ENCODE measurements at regions of chr1 and their contacts with region 1.

Region 1: DNA sequence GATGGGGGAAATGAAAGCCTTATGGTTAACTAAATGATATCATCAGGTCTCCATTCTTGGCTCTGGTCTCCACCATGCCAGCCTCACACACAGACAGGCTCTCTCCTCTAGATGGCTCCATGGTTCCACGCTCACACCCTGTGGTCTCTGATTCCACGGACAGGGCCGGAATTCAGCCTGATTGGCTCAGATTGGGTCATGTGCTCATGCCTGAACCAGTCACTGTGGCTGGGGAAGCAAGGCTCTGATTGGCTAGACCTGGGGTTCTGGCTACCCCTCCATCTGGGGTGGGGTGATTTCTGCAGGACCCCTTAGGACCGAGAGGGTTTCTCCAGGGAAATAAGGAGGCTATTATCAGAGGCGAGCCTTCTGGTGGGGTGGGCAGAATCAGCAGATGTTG is 277.0 kb downstream of the PTPRU start:
- DNase-seq: peak in 1 of 2 donors; percentile 24
- ATAC-seq: peak; percentile 53 to 97 (median 84)
- H3K4me3 ChIP-seq: no peak overlapping the region
- H3K27ac ChIP-seq: no peak overlapping the region
- H3K4me1 ChIP-seq: no peaks in the 10 kb centered on the region
- H3K27me3 ChIP-seq: peaks cover 0 to 26% (median 4%) of the 10 kb centered on the region in 3 donors
- CTCF ChIP-seq: peak; percentile 40

Region 2: GRCh38 chr1:29688471-29689365 is 175.4 kb after region 1 on chr1:
- intact Hi-C with region 1: loop called in 1 of 2 experiments (anchors 10 kb)
- DNase-seq: peak in 1 of 2 donors; percentile 26
- ATAC-seq: no peak
- H3K4me3 ChIP-seq: no peak overlapping the region
- H3K27ac ChIP-seq: no peak overlapping the region
- H3K4me1 ChIP-seq: no peaks in the 10 kb centered on the region
- H3K27me3 ChIP-seq: peaks cover 0 to 38% (median 8%) of the 10 kb centered on the region in 3 donors
- CTCF ChIP-seq: no peak

Region 3: DNA sequence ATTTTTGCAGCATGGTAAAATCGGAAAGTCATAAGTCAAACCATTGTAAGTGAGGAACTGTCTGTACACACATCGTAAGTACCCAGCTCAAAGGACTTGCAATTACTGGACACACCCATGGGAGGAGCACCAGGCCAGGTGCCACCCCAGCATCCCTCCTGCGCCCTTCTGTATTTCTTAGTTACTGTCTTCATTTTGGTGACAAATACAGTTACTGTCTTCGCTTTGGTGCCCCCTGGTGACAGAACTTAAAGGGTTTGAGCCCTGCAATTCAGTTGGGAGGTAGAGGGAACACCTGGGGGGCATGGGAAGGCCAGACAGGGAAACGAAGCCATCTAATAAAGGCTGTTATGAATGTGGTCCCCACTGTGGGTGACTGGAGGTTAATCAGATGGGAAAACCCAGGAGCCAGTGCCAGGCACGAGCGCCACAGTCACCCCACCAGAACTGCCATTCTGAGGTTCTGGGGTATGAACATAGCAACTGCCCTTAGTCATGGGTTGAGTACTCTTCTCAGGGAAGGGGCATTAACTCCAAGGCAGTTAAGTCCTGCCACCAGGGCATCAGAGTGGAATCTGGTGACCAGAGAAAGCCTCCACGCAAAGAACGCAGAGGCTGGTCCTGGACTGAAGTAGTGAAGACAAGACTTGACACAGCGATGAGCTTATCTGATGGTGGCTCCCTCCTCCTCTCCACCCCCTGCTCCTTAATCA is 335.8 kb after region 1 on chr1:
- intact Hi-C with region 1: loop called in 1 of 2 experiments (anchors 10 kb)
- DNase-seq: no peak
- ATAC-seq: no peak
- H3K4me3 ChIP-seq: no peak overlapping the region
- H3K27ac ChIP-seq: no peak overlapping the region
- H3K4me1 ChIP-seq: no peaks in the 10 kb centered on the region
- H3K27me3 ChIP-seq: peaks cover 0 to 32% (median 6%) of the 10 kb centered on the region in 3 donors
- CTCF ChIP-seq: peak; percentile 20

Region 4: DNA sequence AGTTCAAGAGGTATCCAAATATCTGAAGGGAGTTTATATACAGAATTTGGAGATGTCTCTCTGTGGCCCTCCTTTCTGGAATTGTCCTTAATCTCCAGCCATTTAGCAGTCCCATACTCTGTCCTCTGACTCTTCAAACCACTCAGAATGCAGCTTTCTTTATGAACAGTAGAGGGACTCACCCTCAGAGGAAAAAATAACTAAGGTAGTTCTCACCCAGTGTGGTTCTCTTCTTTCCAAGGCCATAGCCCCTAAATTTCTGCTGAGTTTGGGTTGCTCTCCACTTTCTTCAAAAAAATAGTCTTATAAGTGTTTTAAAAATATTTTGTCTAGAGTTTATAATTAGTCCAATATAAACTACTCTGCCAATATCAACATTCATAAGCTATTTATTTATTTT is 840.3 kb after region 1 on chr1:
- intact Hi-C with region 1: no loop called
- DNase-seq: no peak
- ATAC-seq: peak in 3 of 4 donors; percentile 30 to 59 (median 50)
- H3K4me3 ChIP-seq: no peak overlapping the region
- H3K27ac ChIP-seq: no peak overlapping the region
- H3K4me1 ChIP-seq: no peaks in the 10 kb centered on the region
- H3K27me3 ChIP-seq: peaks cover 0 to 4% (median 0%) of the 10 kb centered on the region in 3 donors
- CTCF ChIP-seq: peak; percentile 22

Measured in psoas muscle (tissue), 8 donors.